Aorta (tissue), 5 donors: ENCODE measurements at regions of chr6 and their contacts with region 1.

Region 1: GRCh38 chr6:13012977-13013680 is 296.6 kb downstream of the PHACTR1 start:
- DNase-seq: peak; percentile 54 to 84
- ATAC-seq: peak; percentile 9
- H3K4me3 ChIP-seq: peak overlapping the region; percentile 76 to 96
- H3K27ac ChIP-seq: peak overlapping the region; percentile 24 to 70
- H3K4me1 ChIP-seq: peaks cover 0 to 2% of the 10 kb centered on the region in 2 donors
- H3K27me3 ChIP-seq: no peaks in the 10 kb centered on the region

Region 2: DNA sequence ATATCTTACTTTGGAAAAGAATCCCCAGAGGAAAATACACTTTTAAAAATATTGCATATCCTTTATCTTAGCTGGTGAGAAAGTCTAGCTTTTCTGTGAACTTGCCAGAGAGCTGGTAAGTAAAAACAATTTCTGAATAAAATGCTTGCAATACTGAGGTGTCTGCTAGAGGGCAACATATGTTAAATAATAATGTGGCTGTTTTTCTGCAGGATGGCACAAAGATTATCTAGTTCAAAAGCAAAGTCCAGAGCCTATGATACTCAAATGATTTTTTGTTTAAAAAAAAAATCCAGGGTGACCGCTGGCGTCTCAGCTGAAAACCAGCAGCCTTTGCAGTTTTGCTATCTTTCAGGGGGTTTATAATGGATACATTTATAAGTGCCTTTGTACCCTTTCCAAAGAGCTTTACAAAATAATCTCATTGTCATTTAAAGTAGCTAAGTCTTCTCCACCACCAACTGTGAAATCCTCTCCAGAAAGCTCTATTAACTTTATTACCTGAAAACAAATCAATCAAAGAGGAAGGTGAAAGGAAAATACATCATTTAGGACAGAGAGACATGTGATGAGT is 101.7 kb before region 1 on chr6:
- intact Hi-C with region 1: loop called in 1 of 2 experiments (anchors 5 kb)
- DNase-seq: no peak
- ATAC-seq: no peak
- H3K4me3 ChIP-seq: no peak overlapping the region
- H3K27ac ChIP-seq: no peak overlapping the region
- H3K4me1 ChIP-seq: no peaks in the 10 kb centered on the region
- H3K27me3 ChIP-seq: no peaks in the 10 kb centered on the region

Region 3: GRCh38 chr6:12973386-12973785 is 39.7 kb before region 1 on chr6:
- intact Hi-C with region 1: loop called (anchors 5 kb)
- DNase-seq: no peak
- ATAC-seq: no peak
- H3K4me3 ChIP-seq: no peak overlapping the region
- H3K27ac ChIP-seq: no peak overlapping the region
- H3K4me1 ChIP-seq: peaks cover 3 to 11% of the 10 kb centered on the region in 2 donors
- H3K27me3 ChIP-seq: no peaks in the 10 kb centered on the region

Region 4: GRCh38 chr6:13302751-13303667 is 289.9 kb after region 1 on chr6:
- intact Hi-C with region 1: loop called in 1 of 2 experiments (anchors 10 kb)
- DNase-seq: peak; percentile 84 to 89
- ATAC-seq: peak; percentile 85
- H3K4me3 ChIP-seq: peak overlapping the region; percentile 22 to 60
- H3K27ac ChIP-seq: peak overlapping the region in 1 of 2 donors; percentile 68
- H3K4me1 ChIP-seq: no peaks in the 10 kb centered on the region
- H3K27me3 ChIP-seq: no peaks in the 10 kb centered on the region